CD4-positive, alpha-beta memory T cell (primary cell): ENCODE measurements at regions of chr14 and their contacts with region 1.

Region 1: GRCh38 chr14:54773171-54773975 is 129.3 kb downstream of the GCH1 start:
- DNase-seq: peak; percentile 63 to 92 (median 73)
- H3K4me3 ChIP-seq: peak overlapping the region in 1 of 2 donors; percentile 53
- H3K4me3 Mint-ChIP-seq: peak overlapping the region; percentile 16 to 83 (median 61)
- H3K27ac ChIP-seq: peak overlapping the region; percentile 55
- H3K27ac Mint-ChIP-seq: peak overlapping the region; percentile 82 to 98 (median 89)
- H3K4me1 ChIP-seq: peaks cover 22% of the 10 kb centered on the region
- H3K4me1 Mint-ChIP-seq: peaks cover 18 to 30% (median 22%) of the 10 kb centered on the region in 4 donors
- H3K27me3 ChIP-seq: no peaks in the 10 kb centered on the region
- H3K27me3 Mint-ChIP-seq: peaks cover 1 to 3% of the 10 kb centered on the region in 2 donors

Region 2: DNA sequence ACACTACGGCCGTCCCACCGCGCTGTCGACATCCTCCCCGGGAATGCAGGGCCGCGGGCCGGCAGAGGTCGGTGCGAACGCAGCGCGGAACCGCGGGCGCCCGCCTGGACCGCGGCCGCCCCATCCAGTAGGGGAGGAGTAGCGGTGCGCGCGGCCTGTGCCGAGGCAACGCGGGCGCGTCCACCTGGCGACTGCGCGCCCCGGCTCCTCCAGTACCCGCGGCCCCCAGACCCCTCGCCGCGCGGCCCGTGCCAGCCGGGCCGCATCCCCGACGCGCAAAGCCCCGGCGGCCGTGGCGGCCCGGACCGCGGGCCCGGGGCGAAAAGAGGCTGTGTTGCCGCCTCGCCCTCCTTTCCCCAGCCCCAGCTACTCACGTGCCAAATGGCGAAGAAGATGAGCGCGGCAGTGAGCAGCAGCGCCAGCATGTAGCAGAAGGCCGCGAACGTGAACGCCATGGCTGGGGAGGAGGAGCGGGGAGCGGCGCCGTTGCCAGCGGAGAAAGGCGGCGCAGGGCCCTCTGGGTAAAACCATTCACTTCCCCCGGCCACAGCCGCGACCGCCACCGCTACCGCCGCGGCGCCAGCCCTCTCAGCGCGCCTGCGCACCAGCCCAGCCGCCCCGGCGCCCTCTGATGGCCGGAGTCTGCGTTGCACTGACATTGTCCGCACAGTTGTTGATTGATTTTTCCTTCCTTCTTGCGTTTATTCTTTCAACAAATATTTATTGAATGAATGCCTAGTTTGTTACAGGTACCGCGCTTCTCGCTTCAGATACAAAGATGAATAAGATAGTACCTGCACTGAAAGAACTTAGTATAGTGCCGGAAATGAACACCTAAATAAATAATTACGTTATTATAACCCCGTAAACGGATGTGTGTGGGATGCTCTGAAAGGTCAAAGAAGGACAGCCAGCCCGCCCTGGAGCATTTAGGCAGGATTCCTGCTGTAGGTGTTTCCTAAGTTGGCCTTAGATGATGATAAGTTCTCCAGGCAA is 332.2 kb before region 1 on chr14 and contains the start of gene CNIH1:
- CTCF ChIA-PET with region 1: interaction called, 4 read pairs
- POLR2A ChIA-PET with region 1: no interaction called
- intact Hi-C with region 1: loop called (anchors 2 kb)
- DNase-seq: peak; percentile 88 to 96 (median 93)
- H3K4me3 ChIP-seq: peak within 1 kb of the TSS; percentile 45 to 61
- H3K4me3 Mint-ChIP-seq: peak within 1 kb of the TSS; percentile 83 to 95 (median 92)
- H3K27ac ChIP-seq: peak within 1 kb of the TSS; percentile 55
- H3K27ac Mint-ChIP-seq: peak within 1 kb of the TSS; percentile 88 to 98 (median 94)
- H3K4me1 ChIP-seq: peaks cover 49% of the 10 kb centered on the region
- H3K4me1 Mint-ChIP-seq: peaks cover 29 to 55% (median 36%) of the 10 kb centered on the region in 4 donors
- H3K27me3 ChIP-seq: no peaks in the 10 kb centered on the region
- H3K27me3 Mint-ChIP-seq: peaks cover 1 to 2% of the 10 kb centered on the region in 2 donors
- total RNA-seq, gene CNIH1: 46.9 to 54.2 TPM

Region 3: DNA sequence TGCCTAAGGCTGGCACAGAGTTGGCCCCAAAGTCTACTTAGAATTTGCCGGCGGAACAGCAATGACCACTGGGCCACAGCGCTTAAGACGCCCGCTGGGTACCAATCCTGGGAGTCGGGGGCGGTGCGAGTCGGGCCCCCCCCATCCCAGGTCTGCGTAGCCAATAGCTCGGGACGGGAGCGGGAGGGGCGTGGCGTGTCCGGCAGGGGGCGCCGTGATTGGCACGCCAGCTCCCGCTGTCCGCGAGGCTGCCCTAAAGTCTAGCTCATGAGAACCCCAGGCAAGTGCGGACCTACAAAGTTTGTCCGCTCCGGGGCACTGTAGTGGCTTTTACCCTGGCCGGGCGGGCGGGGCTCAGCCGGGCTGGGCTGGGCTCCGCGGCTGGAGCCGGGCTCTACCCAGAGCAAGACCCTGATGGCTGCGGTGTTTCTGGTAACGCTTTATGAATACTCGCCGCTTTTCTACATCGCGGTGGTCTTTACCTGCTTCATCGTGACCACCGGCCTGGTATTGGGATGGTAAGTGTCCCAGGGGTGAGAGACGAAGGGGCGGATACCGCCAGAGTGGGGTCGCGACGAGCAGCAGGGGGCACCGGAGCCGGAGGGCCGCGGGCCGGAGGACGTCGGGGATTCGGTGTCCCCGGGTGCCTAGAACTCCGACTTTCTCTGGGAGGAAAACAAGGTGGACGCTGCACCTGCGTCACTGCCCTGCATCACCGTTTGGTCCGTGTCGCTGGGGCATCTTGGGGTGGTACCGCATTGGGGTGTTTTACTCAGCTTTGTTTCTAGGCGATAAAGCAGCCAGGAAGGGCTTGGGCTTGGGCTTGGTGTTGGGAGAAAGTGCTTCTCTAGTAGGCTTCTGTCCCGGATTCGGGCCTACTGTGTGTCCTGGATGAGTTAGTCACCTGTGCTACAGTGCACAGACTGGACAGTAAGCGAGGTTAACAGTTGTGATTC is 263.5 kb before region 1 on chr14 and contains the start of gene CGRRF1:
- CTCF ChIA-PET with region 1: interaction called, 14 read pairs
- POLR2A ChIA-PET with region 1: interaction called, 3 read pairs
- intact Hi-C with region 1: loop called (anchors 1 kb)
- DNase-seq: peak; percentile 93 to 95 (median 93)
- H3K4me3 ChIP-seq: peak within 1 kb of the TSS; percentile 86 to 87
- H3K4me3 Mint-ChIP-seq: peak within 1 kb of the TSS; percentile 93 to 99 (median 97)
- H3K27ac ChIP-seq: peak within 1 kb of the TSS; percentile 77
- H3K27ac Mint-ChIP-seq: peak within 1 kb of the TSS; percentile 84 to 97 (median 96)
- H3K4me1 ChIP-seq: peaks cover 41% of the 10 kb centered on the region
- H3K4me1 Mint-ChIP-seq: peaks cover 46 to 61% (median 50%) of the 10 kb centered on the region in 4 donors
- H3K27me3 ChIP-seq: no peaks in the 10 kb centered on the region
- H3K27me3 Mint-ChIP-seq: no peaks in the 10 kb centered on the region
- total RNA-seq, gene CGRRF1: 21.8 to 23.8 TPM

Region 4: GRCh38 chr14:54691525-54692283 is 81.7 kb before region 1 on chr14:
- CTCF ChIA-PET with region 1: interaction called, 10 read pairs
- POLR2A ChIA-PET with region 1: no interaction called
- intact Hi-C with region 1: no loop called
- DNase-seq: peak in 4 of 5 donors; percentile 17 to 34 (median 30)
- H3K4me3 ChIP-seq: no peak overlapping the region
- H3K4me3 Mint-ChIP-seq: no peak overlapping the region
- H3K27ac ChIP-seq: no peak overlapping the region
- H3K27ac Mint-ChIP-seq: no peak overlapping the region
- H3K4me1 ChIP-seq: no peaks in the 10 kb centered on the region
- H3K4me1 Mint-ChIP-seq: no peaks in the 10 kb centered on the region
- H3K27me3 ChIP-seq: no peaks in the 10 kb centered on the region
- H3K27me3 Mint-ChIP-seq: peaks cover 2 to 4% of the 10 kb centered on the region in 2 donors

Region 5: DNA sequence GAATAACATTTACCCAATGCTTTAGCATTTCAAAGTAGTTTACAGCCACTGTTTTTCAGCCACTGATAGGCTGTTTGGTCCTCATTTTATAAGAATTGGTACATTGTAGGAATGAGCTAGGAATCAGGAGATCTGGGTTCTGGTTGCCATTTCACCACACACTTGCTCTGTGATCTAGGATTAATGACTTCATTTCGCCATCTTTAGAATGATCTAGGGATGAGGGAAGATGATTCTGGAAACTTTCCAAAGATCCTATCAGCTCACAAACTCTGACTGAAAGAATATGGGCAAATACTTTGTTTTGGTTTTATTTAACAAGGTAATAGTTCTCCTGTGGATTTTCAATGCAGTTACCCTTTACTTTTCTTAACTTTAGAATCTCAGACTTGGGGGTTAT is 25.8 kb before region 1 on chr14:
- CTCF ChIA-PET with region 1: interaction called, 11 read pairs
- POLR2A ChIA-PET with region 1: no interaction called
- intact Hi-C with region 1: no loop called
- DNase-seq: no peak
- H3K4me3 ChIP-seq: no peak overlapping the region
- H3K4me3 Mint-ChIP-seq: no peak overlapping the region
- H3K27ac ChIP-seq: no peak overlapping the region
- H3K27ac Mint-ChIP-seq: no peak overlapping the region
- H3K4me1 ChIP-seq: peaks cover 2% of the 10 kb centered on the region
- H3K4me1 Mint-ChIP-seq: peaks cover 0 to 8% (median 4%) of the 10 kb centered on the region in 4 donors
- H3K27me3 ChIP-seq: no peaks in the 10 kb centered on the region
- H3K27me3 Mint-ChIP-seq: no peaks in the 10 kb centered on the region

Region 6: GRCh38 chr14:54845641-54846040 is 72.3 kb after region 1 on chr14:
- CTCF ChIA-PET with region 1: no interaction called
- POLR2A ChIA-PET with region 1: no interaction called
- intact Hi-C with region 1: no loop called
- DNase-seq: no peak
- H3K4me3 ChIP-seq: no peak overlapping the region
- H3K4me3 Mint-ChIP-seq: no peak overlapping the region
- H3K27ac ChIP-seq: no peak overlapping the region
- H3K27ac Mint-ChIP-seq: peak overlapping the region in 1 of 7 donors; percentile 29
- H3K4me1 ChIP-seq: no peaks in the 10 kb centered on the region
- H3K4me1 Mint-ChIP-seq: peaks cover 0 to 5% (median 1%) of the 10 kb centered on the region in 4 donors
- H3K27me3 ChIP-seq: no peaks in the 10 kb centered on the region
- H3K27me3 Mint-ChIP-seq: no peaks in the 10 kb centered on the region

Region 7: GRCh38 chr14:55133416-55133815 is 360.0 kb after region 1 on chr14:
- CTCF ChIA-PET with region 1: no interaction called
- POLR2A ChIA-PET with region 1: no interaction called
- intact Hi-C with region 1: no loop called
- DNase-seq: no peak
- H3K4me3 ChIP-seq: no peak overlapping the region
- H3K4me3 Mint-ChIP-seq: no peak overlapping the region
- H3K27ac ChIP-seq: no peak overlapping the region
- H3K27ac Mint-ChIP-seq: no peak overlapping the region
- H3K4me1 ChIP-seq: peaks cover 23% of the 10 kb centered on the region
- H3K4me1 Mint-ChIP-seq: peaks cover 15 to 24% (median 22%) of the 10 kb centered on the region in 4 donors
- H3K27me3 ChIP-seq: no peaks in the 10 kb centered on the region
- H3K27me3 Mint-ChIP-seq: peaks cover 0 to 1% of the 10 kb centered on the region in 2 donors